GM12878 (cell line): ENCODE measurements at regions of chr4 and their contacts with region 1.

Region 1: DNA sequence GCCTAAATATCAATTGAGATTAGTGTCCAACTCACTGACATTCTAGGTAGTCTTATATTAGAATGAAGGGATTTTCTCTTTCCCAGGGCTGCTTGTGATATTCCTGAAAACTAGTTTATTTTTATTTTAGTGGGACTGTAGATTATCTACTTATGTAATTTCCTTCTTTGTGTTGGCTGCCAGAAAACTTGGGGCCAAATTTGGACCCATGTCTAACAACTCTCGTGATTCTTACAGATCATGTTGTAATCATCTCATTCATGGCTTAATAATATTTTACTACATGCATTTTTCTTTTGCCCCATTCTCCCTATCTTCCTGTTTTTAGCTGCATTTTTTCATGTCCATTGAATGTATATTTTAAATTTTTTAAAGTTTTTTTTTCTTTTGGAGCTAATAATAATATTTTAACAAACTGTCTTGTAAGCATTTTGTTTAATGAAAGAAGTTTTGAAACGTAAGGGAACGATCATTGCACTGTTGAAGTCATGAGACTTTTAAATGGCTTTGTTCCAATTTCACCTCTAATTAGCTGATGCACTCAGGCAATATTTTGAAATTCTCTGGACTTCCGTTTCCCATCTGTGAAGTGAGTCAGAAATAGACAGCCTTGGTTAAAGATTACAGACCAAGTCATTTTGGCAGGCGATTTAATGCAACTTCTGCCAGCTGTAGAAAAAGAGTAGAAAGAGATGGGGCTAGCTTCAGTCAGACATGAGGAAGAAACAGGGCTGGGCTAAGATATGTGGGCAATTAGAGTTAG is 14.3 kb upstream of the TDO2 start:
- DNase-seq: peak; percentile 58
- ATAC-seq: peak; percentile 98
- H3K4me3 ChIP-seq: no peak overlapping the region
- H3K27ac ChIP-seq: no peak overlapping the region
- H3K4me1 ChIP-seq: no peaks in the 10 kb centered on the region
- H3K27me3 ChIP-seq: no peaks in the 10 kb centered on the region
- CTCF ChIP-seq: no peak
- EP300 ChIP-seq: peak in 1 of 2 experiments; percentile 66; a peak in 1 of 4 replicates
- POLR2A ChIP-seq: no peak
- RAD21 ChIP-seq: no peak

Region 2: DNA sequence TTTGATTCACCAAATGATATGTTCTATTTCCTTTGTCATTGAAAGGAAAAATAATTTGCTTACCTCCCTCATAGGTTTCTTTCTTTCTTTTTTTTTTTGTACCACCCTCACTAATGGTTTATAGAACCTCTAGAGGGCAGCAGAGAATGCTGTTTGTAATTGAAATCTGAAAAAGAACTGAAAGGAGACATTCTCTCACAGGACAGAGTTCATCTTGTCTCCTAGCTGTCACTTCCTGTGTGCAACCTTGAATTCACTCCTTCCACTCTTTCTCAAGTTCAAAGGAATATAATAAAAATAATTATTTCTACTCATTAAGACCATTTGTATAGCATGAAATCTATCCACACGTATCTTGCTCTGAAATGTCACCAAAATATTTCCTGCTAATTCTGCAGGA is 79.4 kb before region 1 on chr4:
- CTCF ChIA-PET with region 1: interaction called, 5 read pairs
- POLR2A ChIA-PET with region 1: no interaction called
- RAD21 ChIA-PET with region 1: interaction called, 3 read pairs
- SMC1A ChIA-PET with region 1: interaction called, 4 read pairs
- in situ Hi-C with region 1: no loop called
- intact Hi-C with region 1: loop called (anchors 5 kb)
- DNase-seq: peak; percentile 55
- ATAC-seq: peak; percentile 99
- H3K4me3 ChIP-seq: no peak overlapping the region
- H3K27ac ChIP-seq: no peak overlapping the region
- H3K4me1 ChIP-seq: no peaks in the 10 kb centered on the region
- H3K27me3 ChIP-seq: no peaks in the 10 kb centered on the region
- CTCF ChIP-seq: peak; percentile 40 to 69 (median 54); a peak in 5 of 6 replicates
- EP300 ChIP-seq: no peak
- POLR2A ChIP-seq: no peak
- RAD21 ChIP-seq: peak; percentile 81

Region 3: DNA sequence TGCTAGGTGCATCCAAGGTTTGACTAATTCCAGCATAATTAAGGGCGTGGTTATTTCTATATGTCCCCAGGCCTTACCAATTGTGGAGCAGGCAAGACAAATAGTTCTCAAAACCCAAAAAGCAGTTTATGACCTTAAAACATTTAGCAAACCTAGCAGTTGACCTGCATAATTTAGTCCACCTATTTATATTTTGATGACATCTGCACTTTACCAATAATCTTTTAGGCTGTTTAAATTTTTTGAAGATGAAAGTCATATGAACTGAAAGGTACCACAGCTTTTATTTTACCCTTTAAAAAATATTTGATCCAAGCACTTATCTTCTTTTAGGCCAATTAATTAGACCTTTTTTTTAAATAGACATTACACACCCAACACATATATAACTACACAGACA is 13.3 kb before region 1 on chr4:
- CTCF ChIA-PET with region 1: no interaction called
- POLR2A ChIA-PET with region 1: interaction called, 7 read pairs
- RAD21 ChIA-PET with region 1: interaction called, 6 read pairs
- SMC1A ChIA-PET with region 1: interaction called, 13 read pairs
- in situ Hi-C with region 1: no loop called
- intact Hi-C with region 1: no loop called
- DNase-seq: no peak
- ATAC-seq: no peak
- H3K4me3 ChIP-seq: no peak overlapping the region
- H3K27ac ChIP-seq: no peak overlapping the region
- H3K4me1 ChIP-seq: no peaks in the 10 kb centered on the region
- H3K27me3 ChIP-seq: no peaks in the 10 kb centered on the region
- CTCF ChIP-seq: no peak
- EP300 ChIP-seq: no peak
- POLR2A ChIP-seq: no peak
- RAD21 ChIP-seq: no peak

Region 4: GRCh38 chr4:155903453-155903852 is 14.2 kb after region 1 on chr4 and contains the start of gene TDO2:
- CTCF ChIA-PET with region 1: no interaction called
- POLR2A ChIA-PET with region 1: interaction called, 7 read pairs
- RAD21 ChIA-PET with region 1: interaction called, 5 read pairs
- SMC1A ChIA-PET with region 1: interaction called, 10 read pairs
- in situ Hi-C with region 1: no loop called
- intact Hi-C with region 1: no loop called
- DNase-seq: no peak
- ATAC-seq: no peak
- H3K4me3 ChIP-seq: no peak within 1 kb of the TSS
- H3K27ac ChIP-seq: no peak within 1 kb of the TSS
- H3K4me1 ChIP-seq: peaks cover 3% of the 10 kb centered on the region; the same call in 1 of the 2 replicates
- H3K27me3 ChIP-seq: no peaks in the 10 kb centered on the region
- CTCF ChIP-seq: no peak
- EP300 ChIP-seq: no peak
- POLR2A ChIP-seq: no peak
- RAD21 ChIP-seq: no peak
- polyA plus RNA-seq, gene TDO2: 0.13 to 0.31 TPM

Region 5: DNA sequence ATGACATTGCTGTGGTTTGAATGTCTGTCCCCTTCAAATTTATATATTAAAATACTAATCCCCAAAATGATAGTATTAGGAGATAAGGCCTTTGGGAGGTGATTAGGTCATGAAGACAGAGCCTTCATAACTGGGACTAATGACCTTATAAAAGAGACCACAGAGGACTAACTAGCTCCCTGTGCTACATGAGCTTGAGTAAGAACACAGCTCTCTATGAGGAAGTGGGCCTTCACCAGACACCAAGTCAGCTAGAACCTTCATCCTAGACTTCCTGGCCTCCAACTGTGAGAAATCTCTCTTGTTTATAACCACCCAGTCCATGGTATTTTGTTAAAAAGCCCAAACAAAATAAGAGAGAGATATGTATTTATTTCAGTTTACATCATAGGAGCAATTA is 306.7 kb after region 1 on chr4:
- CTCF ChIA-PET with region 1: no interaction called
- POLR2A ChIA-PET with region 1: no interaction called
- RAD21 ChIA-PET with region 1: no interaction called
- SMC1A ChIA-PET with region 1: no interaction called
- in situ Hi-C with region 1: no loop called
- intact Hi-C with region 1: loop called (anchors 5 kb)
- DNase-seq: peak; percentile 51
- ATAC-seq: peak; percentile 95
- H3K4me3 ChIP-seq: no peak overlapping the region
- H3K27ac ChIP-seq: no peak overlapping the region
- H3K4me1 ChIP-seq: peaks cover 11% of the 10 kb centered on the region
- H3K27me3 ChIP-seq: no peaks in the 10 kb centered on the region
- CTCF ChIP-seq: no peak
- EP300 ChIP-seq: peak in 1 of 2 experiments; percentile 59; a peak in 1 of 4 replicates
- POLR2A ChIP-seq: no peak
- RAD21 ChIP-seq: no peak